ENCODE measurements at regions of chr9 and their contacts with region 1.

Region 1: GRCh38 chr9:37415011-37415719 is 7.3 kb upstream of the GRHPR start:
- DNase-seq: no peak
- ATAC-seq: peak; percentile 50
- H3K4me3 ChIP-seq: no peak overlapping the region
- H3K27ac ChIP-seq: peak overlapping the region; percentile 45
- H3K4me1 ChIP-seq: peaks cover 46% of the 10 kb centered on the region
- H3K27me3 ChIP-seq: no peaks in the 10 kb centered on the region
- CTCF ChIP-seq: peak; percentile 82 to 89 (median 88)
- EP300 ChIP-seq: no peak
- POLR2A ChIP-seq: no peak
- RAD21 ChIP-seq: peak; percentile 80

Region 2: GRCh38 chr9:36873247-36873875 is 541.8 kb before region 1 on chr9:
- CTCF ChIA-PET with region 1: interaction called, 27 read pairs
- POLR2A ChIA-PET with region 1: no interaction called
- RAD21 ChIA-PET with region 1: interaction called, 5 read pairs
- SMC1A ChIA-PET with region 1: interaction called, 3 read pairs
- in situ Hi-C with region 1: no loop called
- intact Hi-C with region 1: no loop called
- DNase-seq: peak; percentile 28
- ATAC-seq: peak; percentile 95
- H3K4me3 ChIP-seq: no peak overlapping the region
- H3K27ac ChIP-seq: no peak overlapping the region
- H3K4me1 ChIP-seq: peaks cover 27% of the 10 kb centered on the region
- H3K27me3 ChIP-seq: no peaks in the 10 kb centered on the region
- CTCF ChIP-seq: peak; percentile 86 to 91 (median 89); a peak in 5 of 6 replicates
- EP300 ChIP-seq: no peak
- POLR2A ChIP-seq: no peak
- RAD21 ChIP-seq: peak; percentile 86

Region 3: DNA sequence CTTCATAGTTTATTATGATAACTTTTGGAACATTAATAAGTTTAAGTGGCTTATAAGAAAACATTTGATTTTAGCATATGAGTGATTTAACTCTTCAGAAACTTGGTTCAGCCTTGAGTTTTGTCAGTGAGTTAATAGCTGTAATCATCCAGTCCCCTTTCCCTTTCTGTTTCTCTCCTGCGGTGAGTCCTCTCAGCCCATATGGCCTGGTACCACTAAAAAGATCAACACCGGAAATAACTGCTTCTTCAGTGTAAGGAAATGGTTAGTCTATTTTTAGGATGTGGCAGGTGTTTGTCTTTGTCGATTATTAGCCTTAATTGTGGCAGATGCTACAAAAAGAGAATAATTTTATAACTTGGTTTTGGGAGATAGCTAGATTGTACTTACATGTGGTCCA is 112.9 kb before region 1 on chr9:
- CTCF ChIA-PET with region 1: interaction called, 6 read pairs
- POLR2A ChIA-PET with region 1: interaction called, 3 read pairs
- RAD21 ChIA-PET with region 1: interaction called, 10 read pairs
- SMC1A ChIA-PET with region 1: interaction called, 16 read pairs
- in situ Hi-C with region 1: no loop called
- intact Hi-C with region 1: no loop called
- DNase-seq: peak; percentile 90
- ATAC-seq: peak; percentile 91
- H3K4me3 ChIP-seq: peak overlapping the region; percentile 43; the same call in 1 of the 2 replicates
- H3K27ac ChIP-seq: peak overlapping the region; percentile 95
- H3K4me1 ChIP-seq: peaks cover 48% of the 10 kb centered on the region
- H3K27me3 ChIP-seq: no peaks in the 10 kb centered on the region
- CTCF ChIP-seq: no peak
- EP300 ChIP-seq: peak; percentile 82 to 93
- POLR2A ChIP-seq: no peak
- RAD21 ChIP-seq: peak; percentile 31; the same call in 1 of the 2 replicates

Region 4: DNA sequence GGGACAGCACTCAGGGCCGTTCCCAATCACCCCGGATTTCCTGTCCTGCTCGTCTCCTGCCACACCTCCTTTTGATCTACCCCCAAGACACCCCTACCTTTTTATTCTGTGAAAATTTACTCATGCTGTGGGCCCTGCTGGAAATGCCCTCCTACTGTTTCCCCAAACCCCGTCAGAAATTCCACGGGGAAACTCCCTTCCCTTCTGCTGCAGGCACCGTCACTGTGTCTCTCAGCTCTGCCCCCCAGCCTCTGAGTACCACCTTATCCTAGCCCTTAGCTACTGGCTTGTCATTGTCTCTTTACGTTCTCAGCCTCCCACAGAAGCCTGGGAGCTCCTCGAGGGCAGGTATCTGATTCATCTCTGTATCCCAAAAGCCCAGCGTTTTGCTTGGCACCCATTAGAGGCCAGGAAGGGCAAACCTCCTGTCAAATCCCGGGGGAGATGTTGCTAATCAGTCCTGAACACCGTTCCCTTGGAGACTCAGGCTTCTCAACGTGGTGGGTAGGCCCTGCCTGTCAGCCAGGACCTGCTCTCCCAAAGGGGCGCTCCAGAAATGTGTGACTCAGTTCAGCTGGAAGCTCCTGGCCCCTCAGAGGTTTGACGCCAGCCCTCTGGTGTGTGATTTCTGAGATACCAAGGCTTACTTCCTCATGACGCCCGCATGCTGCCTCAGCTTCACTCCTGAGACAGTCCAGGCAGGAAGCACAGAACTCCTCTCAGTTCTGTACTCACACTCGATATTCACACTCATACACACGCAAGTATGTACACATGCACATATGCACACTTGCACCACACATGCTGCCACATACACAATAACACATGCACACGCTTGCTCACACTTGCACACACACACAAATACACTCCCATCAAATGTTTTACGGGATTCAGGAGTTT is 43.4 kb before region 1 on chr9:
- CTCF ChIA-PET with region 1: interaction called, 220 read pairs
- POLR2A ChIA-PET with region 1: interaction called, 212 read pairs
- RAD21 ChIA-PET with region 1: interaction called, 126 read pairs
- SMC1A ChIA-PET with region 1: interaction called, 14 read pairs
- in situ Hi-C with region 1: no loop called
- intact Hi-C with region 1: no loop called
- DNase-seq: peak; percentile 63
- ATAC-seq: peak; percentile 44
- H3K4me3 ChIP-seq: no peak overlapping the region
- H3K27ac ChIP-seq: peak overlapping the region; percentile 97
- H3K4me1 ChIP-seq: peaks cover 78% of the 10 kb centered on the region
- H3K27me3 ChIP-seq: no peaks in the 10 kb centered on the region
- CTCF ChIP-seq: no peak
- EP300 ChIP-seq: peak in 1 of 2 experiments; percentile 33; a peak in 2 of 4 replicates
- POLR2A ChIP-seq: peak; percentile 7; the same call in 1 of the 2 replicates
- RAD21 ChIP-seq: no peak

Region 5: DNA sequence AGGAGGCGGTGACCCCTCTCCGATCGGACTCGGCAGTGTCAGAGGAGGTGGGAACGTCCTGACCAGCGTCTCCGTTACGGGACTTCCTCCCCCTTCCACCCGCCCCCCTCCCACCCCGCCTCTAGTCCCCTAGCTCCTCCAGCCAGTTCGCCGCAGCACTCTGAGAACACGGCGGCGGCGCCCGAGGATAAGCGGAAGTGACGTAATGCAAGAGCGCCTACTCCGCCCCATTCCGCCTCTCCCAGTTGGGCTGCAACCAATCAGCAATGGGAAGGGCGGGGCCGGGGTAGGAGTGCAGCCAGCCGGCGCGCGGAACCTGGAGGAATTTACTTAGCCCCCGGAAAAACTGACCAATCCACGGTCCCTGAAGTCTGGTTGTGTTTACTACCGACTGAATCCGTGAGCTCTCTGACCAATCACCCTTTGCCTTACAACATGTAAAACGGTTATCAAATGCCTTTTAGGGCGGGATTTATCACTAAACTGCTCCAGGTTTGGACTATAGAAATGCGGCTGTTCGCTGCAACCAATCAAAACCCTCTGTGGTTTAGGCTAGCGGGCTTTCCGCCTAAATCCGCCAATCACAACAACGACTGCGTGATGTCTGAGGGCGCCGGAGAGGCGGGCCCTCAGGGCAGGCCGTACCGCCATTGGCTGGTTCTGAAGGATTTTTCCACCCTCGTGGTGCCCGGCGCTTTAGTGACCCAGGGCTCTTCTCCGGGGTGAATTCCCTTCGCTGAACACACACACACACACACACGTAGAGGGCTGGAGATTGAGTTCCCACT is 50.3 kb after region 1 on chr9 and contains the start of gene ZBTB5:
- CTCF ChIA-PET with region 1: interaction called, 9 read pairs
- POLR2A ChIA-PET with region 1: interaction called, 5 read pairs
- RAD21 ChIA-PET with region 1: interaction called, 12 read pairs
- SMC1A ChIA-PET with region 1: interaction called, 8 read pairs
- in situ Hi-C with region 1: no loop called
- intact Hi-C with region 1: loop called (anchors 2 kb)
- DNase-seq: peak; percentile 100
- ATAC-seq: peak; percentile 85
- H3K4me3 ChIP-seq: peak within 1 kb of the TSS; percentile 84
- H3K27ac ChIP-seq: peak within 1 kb of the TSS; percentile 92
- H3K4me1 ChIP-seq: no peaks in the 10 kb centered on the region
- H3K27me3 ChIP-seq: no peaks in the 10 kb centered on the region
- CTCF ChIP-seq: no peak
- EP300 ChIP-seq: no peak
- POLR2A ChIP-seq: no peak
- RAD21 ChIP-seq: no peak
- polyA plus RNA-seq, gene ZBTB5: 1.4 to 2.5 TPM

Region 6: GRCh38 chr9:37592108-37592951 is 177.2 kb after region 1 on chr9 and contains the start of gene TOMM5:
- CTCF ChIA-PET with region 1: interaction called, 4 read pairs
- POLR2A ChIA-PET with region 1: interaction called, 5 read pairs
- RAD21 ChIA-PET with region 1: interaction called, 3 read pairs
- SMC1A ChIA-PET with region 1: interaction called, 4 read pairs
- in situ Hi-C with region 1: no loop called
- intact Hi-C with region 1: loop called (anchors 2 kb)
- DNase-seq: peak; percentile 76
- ATAC-seq: peak; percentile 92
- H3K4me3 ChIP-seq: peak within 1 kb of the TSS; percentile 73
- H3K27ac ChIP-seq: peak within 1 kb of the TSS; percentile 94
- H3K4me1 ChIP-seq: peaks cover 8% of the 10 kb centered on the region
- H3K27me3 ChIP-seq: no peaks in the 10 kb centered on the region
- CTCF ChIP-seq: no peak
- EP300 ChIP-seq: no peak
- POLR2A ChIP-seq: peak; percentile 99
- RAD21 ChIP-seq: no peak
- polyA plus RNA-seq, gene TOMM5: 1,100 to 1,143 TPM